Spleen (tissue), 13 donors: ENCODE measurements at regions of chr20 and their contacts with region 1.

Region 1: GRCh38 chr20:23441850-23442313 is 2.4 kb downstream of the CSTL1 start:
- DNase-seq: peak; percentile 76
- H3K4me3 ChIP-seq: no peak overlapping the region
- H3K27ac ChIP-seq: no peak overlapping the region
- H3K4me1 ChIP-seq: peaks cover 0 to 5% (median 0%) of the 10 kb centered on the region in 6 donors
- H3K27me3 ChIP-seq: no peaks in the 10 kb centered on the region
- CTCF ChIP-seq: peak; percentile 57 to 92 (median 80)
- POLR2A ChIP-seq: no peak

Region 2: DNA sequence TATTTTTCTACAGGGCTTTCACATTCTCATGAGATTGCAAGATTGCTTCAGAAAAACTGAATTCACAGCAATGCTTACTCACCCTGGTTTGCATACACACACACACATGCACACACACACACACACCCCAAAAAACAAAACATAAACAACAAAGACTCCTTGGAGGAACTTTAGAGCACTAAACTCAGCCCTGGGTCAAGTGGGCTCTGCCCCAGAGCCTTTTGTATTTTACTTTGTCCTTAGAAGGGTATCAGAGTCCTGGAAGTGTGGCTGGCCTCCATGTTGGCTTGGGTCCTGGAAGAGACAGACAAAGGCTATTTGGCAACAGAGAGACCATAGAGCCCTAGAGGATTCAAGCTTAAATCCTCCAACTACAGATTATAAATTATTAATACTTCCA is 171.8 kb after region 1 on chr20:
- intact Hi-C with region 1: loop called (anchors 5 kb)
- DNase-seq: no peak
- H3K4me3 ChIP-seq: no peak overlapping the region
- H3K27ac ChIP-seq: no peak overlapping the region
- H3K4me1 ChIP-seq: peaks cover 0 to 4% (median 0%) of the 10 kb centered on the region in 6 donors
- H3K27me3 ChIP-seq: no peaks in the 10 kb centered on the region
- CTCF ChIP-seq: no peak
- POLR2A ChIP-seq: no peak